ENCODE measurements at regions of chr7 and their contacts with region 1.

Region 1: DNA sequence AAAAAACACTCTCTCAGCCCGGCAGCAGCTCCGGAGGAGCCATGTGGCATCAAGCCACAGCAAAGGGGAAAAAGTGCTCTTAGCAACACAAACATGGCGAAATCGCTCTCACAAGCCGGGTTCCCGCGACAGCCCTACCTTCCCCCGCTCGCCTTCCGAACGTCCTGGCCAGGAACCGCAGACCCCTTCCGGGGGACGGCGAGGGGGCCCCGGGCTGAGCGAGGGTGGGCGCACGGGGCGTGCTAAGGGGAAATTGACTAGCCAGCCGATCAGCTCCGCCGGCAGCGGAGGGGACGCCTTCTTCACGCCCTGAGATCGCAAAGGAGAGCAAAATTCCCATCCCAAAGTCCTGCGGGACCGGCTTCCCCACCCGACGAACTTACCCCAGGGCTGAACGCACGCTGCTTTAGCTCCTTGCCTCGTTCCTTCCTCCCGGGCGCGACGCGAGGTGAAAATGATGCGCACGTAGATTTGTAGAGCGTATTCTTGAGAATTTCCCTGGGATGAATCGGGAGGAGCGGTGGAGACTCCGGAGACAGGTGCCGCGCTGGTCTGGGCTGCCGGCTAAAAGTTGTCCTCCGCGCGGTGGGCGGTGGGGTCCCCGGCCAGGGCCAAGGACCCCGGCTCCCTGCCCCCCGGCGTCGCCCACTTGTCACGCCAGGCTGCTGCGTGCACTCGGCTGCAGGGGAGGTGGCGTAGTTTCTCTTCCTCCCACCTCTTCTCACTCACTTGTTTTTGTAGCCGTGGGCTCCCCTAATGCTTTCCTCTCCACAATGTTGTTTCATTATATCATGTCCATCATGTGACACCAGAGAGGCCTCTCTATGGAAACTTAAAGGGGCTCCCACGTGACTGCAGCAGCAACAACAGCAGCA is 220.1 kb upstream of the MKLN1 start:
- H3K4me3 Mint-ChIP-seq: peak overlapping the region; percentile 85
- H3K27ac Mint-ChIP-seq: peak overlapping the region; percentile 92
- H3K4me1 Mint-ChIP-seq: peaks cover 58% of the 10 kb centered on the region
- H3K27me3 Mint-ChIP-seq: no peaks in the 10 kb centered on the region

Region 2: GRCh38 chr7:131061818-131062217 is 45.8 kb before region 1 on chr7:
- intact Hi-C with region 1: loop called (anchors 5 kb)
- H3K4me3 Mint-ChIP-seq: no peak overlapping the region
- H3K27ac Mint-ChIP-seq: no peak overlapping the region
- H3K4me1 Mint-ChIP-seq: peaks cover 9% of the 10 kb centered on the region
- H3K27me3 Mint-ChIP-seq: no peaks in the 10 kb centered on the region

Region 3: GRCh38 chr7:131219312-131220041 is 111.9 kb after region 1 on chr7:
- intact Hi-C with region 1: loop called (anchors 5 kb)
- H3K4me3 Mint-ChIP-seq: no peak overlapping the region
- H3K27ac Mint-ChIP-seq: peak overlapping the region; percentile 78
- H3K4me1 Mint-ChIP-seq: peaks cover 36% of the 10 kb centered on the region
- H3K27me3 Mint-ChIP-seq: no peaks in the 10 kb centered on the region

Region 4: DNA sequence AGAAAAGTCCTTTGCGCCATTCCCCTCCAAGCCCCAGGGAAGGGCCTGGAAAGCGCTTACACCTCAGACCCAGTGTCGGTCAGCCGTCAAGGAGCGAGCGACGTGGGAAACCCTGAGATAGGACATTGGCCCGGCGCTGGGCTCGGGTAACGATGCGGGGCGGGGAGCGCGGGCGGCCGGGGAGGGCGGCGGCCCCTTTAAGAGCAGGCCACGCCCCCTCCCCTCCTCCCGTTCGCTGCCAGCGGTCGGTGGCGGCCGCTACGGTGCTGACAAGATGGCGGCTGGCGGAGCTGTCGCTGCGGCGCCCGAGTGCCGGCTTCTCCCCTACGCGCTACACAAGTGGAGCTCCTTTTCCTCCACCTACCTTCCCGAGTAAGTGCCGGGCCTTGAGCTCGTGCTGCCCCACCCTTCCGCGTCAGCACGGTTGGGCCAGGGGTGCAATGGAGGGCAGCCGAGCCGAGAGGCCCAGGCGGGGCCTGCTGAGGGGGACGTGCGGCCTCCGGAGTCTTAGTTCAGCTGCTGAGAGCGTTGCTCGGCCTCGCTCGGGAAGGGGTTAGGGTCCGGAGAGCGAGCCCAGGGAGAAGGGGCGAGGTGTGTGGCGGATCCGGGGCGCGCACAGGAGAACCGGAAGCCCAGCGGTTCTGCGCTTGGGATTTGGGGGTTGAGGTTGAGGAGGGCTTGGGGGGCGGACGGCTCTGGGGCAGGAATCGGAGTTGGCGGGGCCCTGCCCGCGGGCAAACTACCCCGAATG is 220.2 kb after region 1 on chr7 and contains the start of gene MKLN1:
- intact Hi-C with region 1: loop called (anchors 2 kb)
- H3K4me3 Mint-ChIP-seq: peak within 1 kb of the TSS; percentile 96
- H3K27ac Mint-ChIP-seq: peak within 1 kb of the TSS; percentile 96
- H3K4me1 Mint-ChIP-seq: peaks cover 49% of the 10 kb centered on the region
- H3K27me3 Mint-ChIP-seq: no peaks in the 10 kb centered on the region

Region 5: GRCh38 chr7:131745390-131746248 is 638.0 kb after region 1 on chr7:
- intact Hi-C with region 1: no loop called
- H3K4me3 Mint-ChIP-seq: no peak overlapping the region
- H3K27ac Mint-ChIP-seq: no peak overlapping the region
- H3K4me1 Mint-ChIP-seq: no peaks in the 10 kb centered on the region
- H3K27me3 Mint-ChIP-seq: peaks cover 2% of the 10 kb centered on the region

Measured in dendritic cell treated with granulocyte-macrophage colony-stimulating factor and Interleukin-4, amounts not matched to agents 40 ng/mL and 50 ng/mL, for 4 days (primary cell).